Dorsolateral prefrontal cortex (tissue), 120 donors: ENCODE measurements at regions of chr5 and their contacts with region 1.

Region 1: DNA sequence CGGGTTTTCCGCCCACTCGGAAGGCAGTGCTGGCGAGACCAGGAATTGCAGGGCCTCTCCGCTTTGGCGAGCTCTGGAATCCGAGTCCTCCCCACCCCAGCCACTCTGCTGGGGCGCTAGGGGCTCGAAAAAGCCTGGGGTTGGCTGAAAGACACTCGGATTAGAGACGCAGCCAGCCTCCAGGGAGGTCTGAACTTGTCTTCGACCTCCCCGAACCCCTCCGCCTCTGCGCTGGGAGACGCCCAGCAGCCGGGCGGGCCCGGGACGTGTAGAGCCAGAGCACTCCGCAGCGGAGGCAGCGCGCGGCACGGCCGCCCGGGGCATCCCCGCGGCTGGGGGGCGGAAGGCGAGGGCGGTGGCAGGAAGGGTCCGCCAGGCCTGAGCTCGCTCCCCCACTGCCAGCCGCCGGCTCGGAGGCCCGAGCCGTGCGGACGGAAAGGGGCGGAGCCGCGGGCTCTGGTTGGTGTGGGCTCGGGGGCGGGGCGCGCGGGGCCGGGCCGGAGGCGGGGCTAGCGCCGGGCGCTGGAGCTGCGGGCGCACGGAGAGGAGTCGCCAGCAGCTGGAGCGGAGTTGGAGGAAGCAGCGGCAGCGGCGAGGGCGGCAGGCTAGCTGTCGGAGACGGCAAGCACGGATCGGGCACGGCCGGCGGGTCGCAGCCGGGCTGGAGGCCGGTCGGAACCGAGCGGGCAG is at the start of gene PIK3R1:
- DNase-seq: peak; percentile 85 to 98 (median 94)
- H3K4me3 ChIP-seq: peak within 1 kb of the TSS; percentile 55 to 99 (median 94)
- H3K27ac ChIP-seq: peak within 1 kb of the TSS; percentile 90 to 100 (median 99)
- H3K27me3 ChIP-seq: no peaks in the 10 kb centered on the region
- CTCF ChIP-seq: peak in 49 of 56 donors; percentile 4 to 61 (median 40)
- total RNA-seq, gene PIK3R1: 172 to 359 (median 273) TPM

Region 2: GRCh38 chr5:68012429-68012828 is 202.9 kb before region 1 on chr5:
- intact Hi-C with region 1: loop called in 1 of 2 experiments (anchors 10 kb)
- DNase-seq: no peak
- H3K4me3 ChIP-seq: no peak overlapping the region
- H3K27ac ChIP-seq: no peak overlapping the region
- H3K27me3 ChIP-seq: no peaks in the 10 kb centered on the region
- CTCF ChIP-seq: no peak

Region 3: DNA sequence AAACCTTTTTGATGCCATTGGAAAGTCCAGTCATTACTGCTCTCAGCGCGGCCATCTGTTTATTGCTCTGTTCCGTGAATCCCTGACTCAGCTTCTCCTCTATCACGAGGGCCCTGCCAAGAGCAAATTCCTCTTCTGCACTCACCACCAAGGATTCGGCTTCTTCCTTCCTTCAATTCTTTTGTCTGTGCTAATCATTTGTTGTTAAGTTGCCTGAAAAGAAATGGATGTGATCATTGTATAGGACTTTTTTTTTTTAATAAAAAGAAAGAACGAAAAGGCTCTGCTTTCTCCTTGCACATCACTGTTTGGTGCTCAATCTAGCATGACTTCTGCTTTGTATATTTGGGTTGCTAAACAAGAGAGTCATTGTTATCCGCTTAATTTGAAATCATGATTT is 128.5 kb before region 1 on chr5:
- intact Hi-C with region 1: loop called (anchors 2 to 10 kb)
- DNase-seq: peak in 6 of 10 donors; percentile 18 to 57 (median 48)
- H3K4me3 ChIP-seq: peak overlapping the region in 40 of 59 donors; percentile 1 to 55 (median 22)
- H3K27ac ChIP-seq: peak overlapping the region in 58 of 59 donors; percentile 34 to 93 (median 83)
- H3K27me3 ChIP-seq: no peaks in the 10 kb centered on the region
- CTCF ChIP-seq: peak in 3 of 56 donors; percentile 8 to 26 (median 14)

Region 4: DNA sequence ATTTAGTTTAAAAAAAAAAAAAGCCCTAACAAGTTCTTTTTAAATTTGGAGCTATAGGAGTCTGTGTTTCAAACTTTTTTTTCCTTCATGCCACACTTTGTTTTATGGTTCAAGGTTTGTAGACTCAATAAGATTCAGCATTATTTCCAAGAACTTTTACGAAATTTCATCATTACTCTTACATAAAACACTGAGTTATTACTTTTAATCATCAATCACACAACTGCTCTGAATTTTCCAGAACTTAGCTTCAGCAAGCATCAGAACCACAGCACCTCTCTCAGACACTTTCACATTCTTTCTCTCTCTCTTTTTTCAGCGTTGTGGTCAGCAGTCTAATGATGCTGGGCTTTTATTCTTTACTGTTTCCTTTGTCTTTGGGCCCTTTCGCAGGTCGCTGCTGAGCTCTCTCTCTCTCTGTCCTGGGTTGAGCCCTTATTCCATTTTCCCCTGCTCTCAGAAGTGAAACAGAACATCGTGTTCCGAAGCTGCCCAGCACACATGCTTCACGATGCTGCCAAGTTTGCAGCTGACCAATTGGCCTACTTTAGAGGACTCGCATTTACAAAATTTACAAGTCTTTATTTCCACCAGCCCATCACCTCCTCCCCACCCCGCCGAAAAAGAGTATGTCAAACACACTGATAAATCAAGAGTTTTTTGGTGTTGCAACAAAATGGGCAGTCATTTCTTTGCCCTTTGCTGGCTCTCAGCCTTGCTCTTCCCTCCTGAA is 44.4 kb before region 1 on chr5:
- intact Hi-C with region 1: loop called in 1 of 2 experiments (anchors 1 kb)
- DNase-seq: peak; percentile 50 to 78 (median 68)
- H3K4me3 ChIP-seq: peak overlapping the region in 48 of 59 donors; percentile 2 to 50 (median 30)
- H3K27ac ChIP-seq: peak overlapping the region; percentile 8 to 96 (median 85)
- H3K27me3 ChIP-seq: no peaks in the 10 kb centered on the region
- CTCF ChIP-seq: peak in 5 of 56 donors; percentile 10 to 32 (median 23)

Region 5: GRCh38 chr5:68187268-68188055 is 27.9 kb before region 1 on chr5:
- intact Hi-C with region 1: loop called in 1 of 2 experiments (anchors 1 kb)
- DNase-seq: peak; percentile 73 to 93 (median 89)
- H3K4me3 ChIP-seq: peak overlapping the region; percentile 14 to 67 (median 45)
- H3K27ac ChIP-seq: peak overlapping the region; percentile 75 to 99 (median 96)
- H3K27me3 ChIP-seq: no peaks in the 10 kb centered on the region
- CTCF ChIP-seq: peak in 5 of 56 donors; percentile 9 to 20 (median 17)

Region 6: GRCh38 chr5:68252673-68253623 is 37.6 kb after region 1 on chr5:
- intact Hi-C with region 1: loop called (anchors 5 kb)
- DNase-seq: peak in 8 of 10 donors; percentile 52 to 77 (median 60)
- H3K4me3 ChIP-seq: peak overlapping the region in 19 of 59 donors; percentile 0 to 28 (median 5)
- H3K27ac ChIP-seq: peak overlapping the region; percentile 18 to 86 (median 75)
- H3K27me3 ChIP-seq: no peaks in the 10 kb centered on the region
- CTCF ChIP-seq: peak; percentile 35 to 86 (median 70)